MCF 10A (cell line): ENCODE measurements at regions of chr1 and their contacts with region 1.

Region 1: DNA sequence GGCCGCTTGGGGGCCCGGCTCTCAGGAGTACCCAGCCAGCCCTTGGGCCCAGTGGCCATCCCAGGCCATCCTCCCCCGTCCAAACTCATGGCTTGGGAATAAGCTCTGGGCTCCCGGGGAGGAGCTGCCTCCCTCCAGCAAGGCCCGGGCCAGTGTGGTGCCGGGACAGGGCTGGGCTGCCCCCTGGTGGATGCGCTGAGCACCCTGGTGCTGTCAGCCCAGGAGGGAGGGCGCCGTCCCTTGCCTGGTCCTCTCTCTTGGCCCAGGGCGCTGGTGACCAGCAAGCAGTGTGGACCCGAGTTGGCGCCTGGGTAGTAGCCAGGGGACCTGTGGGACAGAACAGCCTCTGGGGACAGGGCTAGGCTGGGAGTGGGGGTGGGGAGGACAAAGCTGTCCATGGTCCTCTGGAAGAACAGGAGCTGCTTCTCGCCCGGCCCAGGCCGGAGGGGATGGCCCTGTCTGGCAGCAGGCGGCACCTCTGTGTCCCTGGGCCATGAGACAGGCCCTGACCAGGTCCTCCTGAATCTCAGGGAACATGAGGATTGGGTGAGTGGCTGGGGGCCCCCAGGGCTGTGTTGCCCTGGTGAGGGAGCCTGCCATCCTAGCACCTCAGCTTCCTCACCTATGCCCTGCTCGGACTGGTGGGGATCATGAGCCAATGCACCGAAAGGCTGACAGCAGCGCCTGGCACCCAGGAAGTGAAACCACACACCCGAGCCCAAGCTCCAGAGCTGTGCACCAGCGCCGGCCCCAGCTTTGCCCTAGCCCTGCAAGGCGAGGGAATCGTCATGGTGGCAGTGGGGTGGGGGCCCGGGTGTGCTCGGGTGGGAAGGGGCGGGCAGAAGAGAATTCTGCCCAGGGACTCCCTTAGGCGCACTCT is 9.4 kb downstream of the MORN1 start:
- DNase-seq: peak; percentile 72
- H3K4me3 Mint-ChIP-seq: no peak overlapping the region
- H3K27ac Mint-ChIP-seq: no peak overlapping the region
- H3K4me1 Mint-ChIP-seq: no peaks in the 10 kb centered on the region
- H3K27me3 Mint-ChIP-seq: no peaks in the 10 kb centered on the region
- CTCF ChIP-seq: peak; percentile 91

Region 2: GRCh38 chr1:2189459-2190425 is 192.2 kb before region 1 on chr1:
- CTCF ChIA-PET with region 1: interaction called, 116 read pairs
- POLR2A ChIA-PET with region 1: interaction called, 18 read pairs
- intact Hi-C with region 1: no loop called
- DNase-seq: peak; percentile 95
- H3K4me3 Mint-ChIP-seq: peak overlapping the region; percentile 83
- H3K27ac Mint-ChIP-seq: peak overlapping the region; percentile 82
- H3K4me1 Mint-ChIP-seq: peaks cover 5% of the 10 kb centered on the region
- H3K27me3 Mint-ChIP-seq: no peaks in the 10 kb centered on the region
- CTCF ChIP-seq: no peak

Region 3: DNA sequence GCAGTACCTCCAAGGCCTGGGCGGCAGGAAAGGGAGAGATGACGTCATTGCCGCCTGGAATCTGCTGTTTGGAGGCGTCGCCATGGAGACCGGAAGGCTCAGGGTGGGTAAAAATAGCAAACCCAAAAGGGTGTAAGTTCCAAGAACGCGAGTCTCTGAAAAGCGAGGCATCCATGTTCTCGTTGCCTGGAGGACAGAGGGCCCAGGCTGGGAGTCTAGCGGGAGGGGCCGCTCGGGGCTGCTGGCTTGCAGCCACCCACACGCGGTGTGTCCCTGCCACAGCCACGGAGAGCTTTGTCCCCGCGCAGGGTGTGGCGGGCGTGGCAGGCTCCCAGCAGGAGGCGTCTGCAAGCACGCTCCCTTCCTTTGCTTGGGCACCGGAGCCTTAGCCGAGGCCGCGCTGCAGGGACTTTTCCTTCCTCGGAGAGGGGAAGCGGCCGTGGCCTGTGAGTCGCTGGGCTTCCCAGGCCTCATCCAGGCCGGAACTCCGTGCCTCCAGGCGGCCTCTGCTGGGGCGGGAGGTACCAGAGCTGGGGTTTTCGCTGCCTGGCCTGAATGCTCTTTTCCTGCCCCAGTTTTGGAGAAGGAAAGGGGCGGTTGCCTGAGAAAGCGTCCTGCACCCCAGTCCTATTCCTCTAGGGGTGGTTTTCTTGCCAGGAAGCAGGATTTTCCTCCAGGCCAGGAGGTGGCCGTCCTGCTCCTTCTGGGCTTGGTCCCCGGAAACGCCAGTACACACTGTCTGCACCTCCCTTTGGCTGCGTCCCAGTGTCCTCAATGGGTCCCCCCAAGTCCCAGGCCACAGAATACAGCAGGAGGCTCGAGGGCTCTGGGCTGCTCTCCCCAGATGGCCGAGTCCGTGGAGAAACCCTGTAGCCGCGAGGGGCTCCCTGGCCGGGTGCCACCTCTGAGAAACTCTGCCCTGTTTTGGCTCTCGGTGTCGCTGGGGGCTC is 169.2 kb before region 1 on chr1:
- CTCF ChIA-PET with region 1: interaction called, 9 read pairs
- POLR2A ChIA-PET with region 1: interaction called, 3 read pairs
- intact Hi-C with region 1: loop called (anchors 1 kb)
- DNase-seq: peak; percentile 89
- H3K4me3 Mint-ChIP-seq: peak overlapping the region; percentile 16
- H3K27ac Mint-ChIP-seq: peak overlapping the region; percentile 83
- H3K4me1 Mint-ChIP-seq: peaks cover 14% of the 10 kb centered on the region
- H3K27me3 Mint-ChIP-seq: no peaks in the 10 kb centered on the region
- CTCF ChIP-seq: peak; percentile 13

Region 4: DNA sequence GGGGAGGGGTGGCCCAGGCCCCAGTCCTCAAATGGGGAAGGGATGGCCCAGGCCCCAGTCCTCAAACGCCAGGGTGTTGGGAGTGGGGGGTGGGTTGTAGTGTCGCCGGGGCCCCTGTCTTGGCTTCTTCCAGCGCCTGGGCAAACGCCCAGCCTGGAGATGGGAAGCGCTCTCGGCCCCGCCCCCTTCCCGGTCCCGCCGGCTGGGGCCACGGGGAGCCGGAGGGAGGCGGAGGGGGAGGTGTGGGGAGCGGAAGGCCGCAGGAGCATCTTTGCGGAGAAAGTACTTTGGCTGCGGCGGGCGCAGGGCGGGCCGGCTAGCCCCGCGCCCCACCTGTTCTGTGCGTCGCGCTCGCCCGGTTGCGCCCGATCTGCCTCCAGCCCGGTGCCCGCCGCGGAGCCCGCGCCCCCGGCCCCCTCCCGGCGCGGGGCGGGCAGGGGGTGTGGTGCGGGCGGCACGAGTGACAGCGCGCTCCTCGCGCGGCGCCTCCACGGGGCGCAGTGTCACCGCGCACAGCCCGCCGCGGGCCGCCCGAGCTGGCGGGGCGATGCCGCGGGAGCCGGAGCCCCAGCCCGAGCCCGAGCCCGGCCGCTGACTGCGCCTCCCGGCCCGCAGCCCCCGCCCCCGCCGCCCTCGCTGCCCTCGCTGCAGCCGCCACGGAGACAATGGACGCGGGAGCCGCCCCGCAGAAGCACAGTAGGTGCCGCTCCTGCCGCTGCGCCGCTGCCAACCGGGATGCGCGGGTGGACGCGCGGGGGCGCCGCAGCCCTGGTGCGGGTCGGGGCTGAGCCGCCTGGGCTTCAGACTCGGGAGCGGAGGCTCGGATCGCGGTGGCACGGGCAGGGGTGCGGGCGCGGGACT is 61.5 kb after region 1 on chr1:
- CTCF ChIA-PET with region 1: no interaction called
- POLR2A ChIA-PET with region 1: no interaction called
- intact Hi-C with region 1: no loop called
- DNase-seq: no peak
- H3K4me3 Mint-ChIP-seq: no peak overlapping the region
- H3K27ac Mint-ChIP-seq: no peak overlapping the region
- H3K4me1 Mint-ChIP-seq: peaks cover 5% of the 10 kb centered on the region
- H3K27me3 Mint-ChIP-seq: no peaks in the 10 kb centered on the region
- CTCF ChIP-seq: no peak